Tibial artery (tissue), 4 donors: ENCODE measurements at regions of chr3 and their contacts with region 1.

Region 1: DNA sequence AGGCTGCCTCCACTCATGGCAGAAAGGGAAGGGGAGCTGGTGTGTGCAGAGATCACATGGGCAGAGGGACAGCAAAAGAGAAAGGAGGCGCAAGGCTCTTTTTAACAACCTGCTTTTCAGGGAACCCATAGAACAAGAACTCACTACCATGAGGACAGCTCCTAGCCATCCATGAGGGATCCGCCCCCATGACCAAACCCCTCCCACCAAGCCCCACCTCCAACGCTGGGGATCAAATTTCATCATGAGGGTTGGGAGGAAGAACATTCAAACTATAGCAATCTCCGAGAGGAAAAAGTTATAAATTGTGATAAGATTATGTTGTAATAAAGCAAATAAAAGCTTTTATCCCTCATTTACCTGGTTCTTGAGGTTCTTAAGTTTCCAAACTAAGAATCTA is 84.7 kb upstream of the LMCD1 start:
- DNase-seq: no peak
- H3K4me3 ChIP-seq: no peak overlapping the region
- H3K27ac ChIP-seq: no peak overlapping the region
- H3K4me1 ChIP-seq: no peaks in the 10 kb centered on the region
- H3K27me3 ChIP-seq: no peaks in the 10 kb centered on the region
- CTCF ChIP-seq: no peak

Region 2: GRCh38 chr3:8278448-8278847 is 138.5 kb before region 1 on chr3:
- intact Hi-C with region 1: no loop called
- DNase-seq: no peak
- H3K4me3 ChIP-seq: no peak overlapping the region
- H3K27ac ChIP-seq: no peak overlapping the region
- H3K4me1 ChIP-seq: no peaks in the 10 kb centered on the region
- H3K27me3 ChIP-seq: no peaks in the 10 kb centered on the region
- CTCF ChIP-seq: no peak

Region 3: DNA sequence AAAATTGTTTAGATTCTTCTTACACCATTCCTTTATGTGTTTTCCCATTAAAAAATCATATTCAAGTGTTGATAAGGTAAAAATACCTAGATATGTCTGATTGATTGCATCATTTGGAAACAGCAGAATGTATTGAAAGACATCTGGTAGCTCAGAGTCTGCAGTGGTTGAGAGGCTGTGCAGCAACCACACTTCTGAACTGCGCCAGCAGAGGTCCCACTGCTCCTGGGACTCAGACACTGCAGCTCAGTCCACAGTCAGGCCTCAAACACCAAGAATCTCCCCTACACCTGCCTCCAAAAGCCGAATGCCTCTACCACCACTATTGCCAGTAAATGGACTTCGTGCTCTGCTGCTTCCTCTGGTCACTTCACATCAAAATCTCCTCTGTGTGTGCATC is 92.2 kb before region 1 on chr3:
- intact Hi-C with region 1: loop called (anchors 10 kb)
- DNase-seq: peak in 1 of 2 donors; percentile 21
- H3K4me3 ChIP-seq: no peak overlapping the region
- H3K27ac ChIP-seq: no peak overlapping the region
- H3K4me1 ChIP-seq: no peaks in the 10 kb centered on the region
- H3K27me3 ChIP-seq: no peaks in the 10 kb centered on the region
- CTCF ChIP-seq: peak in 1 of 2 experiments; percentile 34

Region 4: GRCh38 chr3:8458711-8459110 is 41.7 kb after region 1 on chr3:
- intact Hi-C with region 1: no loop called
- DNase-seq: peak; percentile 74 to 93
- H3K4me3 ChIP-seq: no peak overlapping the region
- H3K27ac ChIP-seq: peak overlapping the region; percentile 84 to 91
- H3K4me1 ChIP-seq: peaks cover 0 to 91% (median 55%) of the 10 kb centered on the region in 4 donors
- H3K27me3 ChIP-seq: no peaks in the 10 kb centered on the region
- CTCF ChIP-seq: no peak

Region 5: GRCh38 chr3:8482960-8483665 is 66.1 kb after region 1 on chr3:
- intact Hi-C with region 1: no loop called
- DNase-seq: peak; percentile 72 to 91
- H3K4me3 ChIP-seq: no peak overlapping the region
- H3K27ac ChIP-seq: peak overlapping the region; percentile 81 to 88
- H3K4me1 ChIP-seq: peaks cover 0 to 75% (median 38%) of the 10 kb centered on the region in 4 donors
- H3K27me3 ChIP-seq: no peaks in the 10 kb centered on the region
- CTCF ChIP-seq: no peak

Region 6: DNA sequence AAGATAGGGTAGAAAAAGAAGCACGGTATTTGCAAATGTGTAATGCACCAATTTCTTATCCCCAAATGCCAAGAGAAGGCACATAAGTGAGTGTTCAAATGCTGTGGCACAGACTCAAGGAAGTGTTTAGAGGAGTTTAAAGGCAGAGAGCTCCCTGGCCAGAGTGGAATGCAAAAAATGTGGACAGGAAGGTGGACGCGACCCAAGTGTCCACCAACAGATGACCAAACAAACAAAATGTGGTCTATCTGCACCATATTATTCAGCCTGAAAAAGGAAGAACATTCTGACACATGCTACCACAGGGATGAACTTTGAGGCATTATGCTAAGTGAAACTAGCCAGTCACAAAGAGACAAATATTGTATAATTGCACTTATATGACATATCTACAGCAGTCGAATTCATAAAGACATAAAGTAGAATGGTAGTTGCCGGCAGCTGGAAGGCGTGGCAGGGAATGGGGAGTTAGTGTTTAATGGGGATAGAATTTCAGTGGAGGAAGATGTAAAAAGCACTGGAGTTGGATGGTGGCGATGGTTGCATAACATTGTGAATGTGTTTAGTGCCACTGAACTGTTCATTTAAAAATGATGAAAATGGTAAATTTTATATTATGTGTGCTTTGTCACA is 705.9 kb after region 1 on chr3:
- intact Hi-C with region 1: no loop called
- DNase-seq: no peak
- H3K4me3 ChIP-seq: no peak overlapping the region
- H3K27ac ChIP-seq: no peak overlapping the region
- H3K4me1 ChIP-seq: no peaks in the 10 kb centered on the region
- H3K27me3 ChIP-seq: no peaks in the 10 kb centered on the region
- CTCF ChIP-seq: no peak